Mammary epithelial cell (primary cell): ENCODE measurements at regions of chr15 and their contacts with region 1.

Region 1: GRCh38 chr15:63504247-63504978 is at the start of gene USP3:
- DNase-seq: peak; percentile 95
- H3K4me3 ChIP-seq: peak within 1 kb of the TSS; percentile 74 to 95 (median 94)
- H3K27ac ChIP-seq: peak within 1 kb of the TSS; percentile 89
- H3K4me1 ChIP-seq: peaks cover 46% of the 10 kb centered on the region
- H3K27me3 ChIP-seq: no peaks in the 10 kb centered on the region
- CTCF ChIP-seq: no peak
- total RNA-seq, gene USP3: 26.3 to 30.6 TPM

Region 2: GRCh38 chr15:63256433-63257274 is 247.8 kb before region 1 on chr15:
- CTCF ChIA-PET with region 1: no interaction called
- dilution Hi-C with region 1: no loop called
- in situ Hi-C with region 1: no loop called
- intact Hi-C with region 1: no loop called
- DNase-seq: peak; percentile 58
- H3K4me3 ChIP-seq: no peak overlapping the region
- H3K27ac ChIP-seq: no peak overlapping the region
- H3K4me1 ChIP-seq: peaks cover 8% of the 10 kb centered on the region
- H3K27me3 ChIP-seq: no peaks in the 10 kb centered on the region
- CTCF ChIP-seq: no peak

Region 3: GRCh38 chr15:63466378-63467192 is 37.8 kb before region 1 on chr15:
- CTCF ChIA-PET with region 1: no interaction called
- dilution Hi-C with region 1: no loop called
- in situ Hi-C with region 1: no loop called
- intact Hi-C with region 1: loop called (anchors 1 kb)
- DNase-seq: peak; percentile 56
- H3K4me3 ChIP-seq: no peak overlapping the region
- H3K27ac ChIP-seq: no peak overlapping the region
- H3K4me1 ChIP-seq: no peaks in the 10 kb centered on the region
- H3K27me3 ChIP-seq: no peaks in the 10 kb centered on the region
- CTCF ChIP-seq: peak; percentile 56 to 73

Region 4: DNA sequence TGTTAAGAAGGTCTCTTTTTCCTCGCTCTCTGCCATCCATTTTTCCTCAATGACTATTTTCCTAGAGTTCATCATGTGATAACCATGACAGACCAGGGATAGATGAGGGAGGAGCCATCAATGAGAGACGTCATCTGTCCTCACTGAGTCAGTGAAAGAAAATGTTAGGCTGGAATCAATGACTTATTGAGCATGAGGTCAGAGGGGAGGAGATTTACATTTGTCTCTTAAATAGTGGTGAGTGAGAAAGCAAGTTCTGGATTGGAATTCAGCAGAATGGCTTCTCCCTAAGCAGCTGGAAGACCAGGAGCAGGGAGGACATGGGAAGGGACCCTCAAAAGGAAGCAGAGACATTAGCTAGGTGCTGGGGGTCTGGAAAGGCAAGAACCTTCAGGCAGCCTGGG is 28.2 kb before region 1 on chr15:
- CTCF ChIA-PET with region 1: no interaction called
- dilution Hi-C with region 1: no loop called
- in situ Hi-C with region 1: no loop called
- intact Hi-C with region 1: loop called (anchors 1 kb)
- DNase-seq: peak; percentile 95
- H3K4me3 ChIP-seq: no peak overlapping the region
- H3K27ac ChIP-seq: peak overlapping the region; percentile 37
- H3K4me1 ChIP-seq: peaks cover 5% of the 10 kb centered on the region
- H3K27me3 ChIP-seq: no peaks in the 10 kb centered on the region
- CTCF ChIP-seq: no peak

Region 5: GRCh38 chr15:63514531-63514943 is 10.1 kb after region 1 on chr15:
- CTCF ChIA-PET with region 1: no interaction called
- dilution Hi-C with region 1: no loop called
- in situ Hi-C with region 1: no loop called
- intact Hi-C with region 1: loop called (anchors 1 kb)
- DNase-seq: peak; percentile 79
- H3K4me3 ChIP-seq: no peak overlapping the region
- H3K27ac ChIP-seq: peak overlapping the region; percentile 63
- H3K4me1 ChIP-seq: peaks cover 45% of the 10 kb centered on the region
- H3K27me3 ChIP-seq: no peaks in the 10 kb centered on the region
- CTCF ChIP-seq: no peak

Region 6: DNA sequence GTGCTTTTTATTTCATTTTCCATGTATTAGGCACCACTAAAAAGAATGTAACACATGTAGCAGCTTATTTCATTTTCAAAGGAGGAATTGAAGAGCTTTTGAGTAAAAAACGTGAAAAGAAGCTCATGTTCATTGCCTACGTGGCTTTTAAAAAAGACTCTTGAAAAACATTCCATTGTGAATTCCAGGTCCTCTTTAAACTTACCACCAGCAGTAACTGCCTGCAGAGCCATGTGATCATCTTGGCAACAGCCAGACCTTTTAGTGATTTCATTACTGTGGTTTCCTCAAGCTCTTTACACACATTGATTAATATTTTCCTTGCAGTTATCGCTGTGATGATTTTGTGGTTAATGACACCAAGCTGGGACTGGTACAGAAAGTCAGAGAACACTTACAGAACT is 49.0 kb after region 1 on chr15:
- CTCF ChIA-PET with region 1: no interaction called
- dilution Hi-C with region 1: no loop called
- in situ Hi-C with region 1: no loop called
- intact Hi-C with region 1: loop called (anchors 1 kb)
- DNase-seq: peak; percentile 92
- H3K4me3 ChIP-seq: no peak overlapping the region
- H3K27ac ChIP-seq: peak overlapping the region; percentile 57
- H3K4me1 ChIP-seq: peaks cover 22% of the 10 kb centered on the region
- H3K27me3 ChIP-seq: no peaks in the 10 kb centered on the region
- CTCF ChIP-seq: no peak

Region 7: GRCh38 chr15:64093627-64094417 is 589.4 kb after region 1 on chr15 and contains the start of gene CIAO2A:
- CTCF ChIA-PET with region 1: no interaction called
- dilution Hi-C with region 1: no loop called
- in situ Hi-C with region 1: no loop called
- intact Hi-C with region 1: loop called (anchors 10 kb)
- DNase-seq: peak; percentile 99
- H3K4me3 ChIP-seq: peak within 1 kb of the TSS; percentile 62 to 69 (median 67)
- H3K27ac ChIP-seq: peak within 1 kb of the TSS; percentile 64
- H3K4me1 ChIP-seq: peaks cover 29% of the 10 kb centered on the region
- H3K27me3 ChIP-seq: no peaks in the 10 kb centered on the region
- CTCF ChIP-seq: no peak
- total RNA-seq, gene CIAO2A: 31.8 to 47.0 TPM